Activated T-helper 1 cell treated with anti-CD3 and anti-CD28 coated beads, Interleukin-12 subunit alpha, Interleukin-12 subunit beta, Interleukin-2, Interleukin-4 antibody, amounts not matched to agents 30 ng/mL and 10 ng/mL and 1 ng/mL, durations not matched to agents 14 hours and 24 hours and 36 hours (primary cell): ENCODE measurements at regions of chr6 and their contacts with region 1.

Region 1: DNA sequence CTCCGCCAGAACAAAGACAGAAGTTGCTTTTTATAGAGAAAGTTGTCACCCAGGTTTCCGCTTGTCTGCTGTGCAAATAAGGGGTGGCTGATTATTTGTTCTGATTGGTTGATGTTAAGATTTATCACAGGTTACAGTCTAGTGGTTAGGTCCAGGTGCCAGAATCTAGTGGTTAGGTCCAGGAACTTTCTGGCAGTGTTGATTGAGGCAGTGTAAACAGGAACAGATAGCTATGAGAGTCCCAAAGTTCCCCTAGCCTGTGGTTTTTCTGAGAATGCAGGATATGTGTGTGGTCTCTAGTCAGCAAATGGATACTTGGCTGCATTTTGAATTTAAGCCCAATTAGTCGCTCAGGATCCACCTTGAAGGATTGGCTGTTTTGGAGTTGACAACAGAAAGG is 148.0 kb downstream of the TMEM200A start:
- DNase-seq: peak; percentile 82
- H3K4me3 Mint-ChIP-seq: peak overlapping the region; percentile 64
- H3K27ac Mint-ChIP-seq: peak overlapping the region; percentile 84
- H3K4me1 Mint-ChIP-seq: peaks cover 65% of the 10 kb centered on the region
- H3K27me3 Mint-ChIP-seq: no peaks in the 10 kb centered on the region

Region 2: GRCh38 chr6:129490521-129491245 is 1023.1 kb before region 1 on chr6:
- intact Hi-C with region 1: loop called (anchors 5 kb)
- DNase-seq: peak; percentile 69
- H3K4me3 Mint-ChIP-seq: peak overlapping the region; percentile 77
- H3K27ac Mint-ChIP-seq: peak overlapping the region; percentile 99
- H3K4me1 Mint-ChIP-seq: peaks cover 68% of the 10 kb centered on the region
- H3K27me3 Mint-ChIP-seq: no peaks in the 10 kb centered on the region

Region 3: DNA sequence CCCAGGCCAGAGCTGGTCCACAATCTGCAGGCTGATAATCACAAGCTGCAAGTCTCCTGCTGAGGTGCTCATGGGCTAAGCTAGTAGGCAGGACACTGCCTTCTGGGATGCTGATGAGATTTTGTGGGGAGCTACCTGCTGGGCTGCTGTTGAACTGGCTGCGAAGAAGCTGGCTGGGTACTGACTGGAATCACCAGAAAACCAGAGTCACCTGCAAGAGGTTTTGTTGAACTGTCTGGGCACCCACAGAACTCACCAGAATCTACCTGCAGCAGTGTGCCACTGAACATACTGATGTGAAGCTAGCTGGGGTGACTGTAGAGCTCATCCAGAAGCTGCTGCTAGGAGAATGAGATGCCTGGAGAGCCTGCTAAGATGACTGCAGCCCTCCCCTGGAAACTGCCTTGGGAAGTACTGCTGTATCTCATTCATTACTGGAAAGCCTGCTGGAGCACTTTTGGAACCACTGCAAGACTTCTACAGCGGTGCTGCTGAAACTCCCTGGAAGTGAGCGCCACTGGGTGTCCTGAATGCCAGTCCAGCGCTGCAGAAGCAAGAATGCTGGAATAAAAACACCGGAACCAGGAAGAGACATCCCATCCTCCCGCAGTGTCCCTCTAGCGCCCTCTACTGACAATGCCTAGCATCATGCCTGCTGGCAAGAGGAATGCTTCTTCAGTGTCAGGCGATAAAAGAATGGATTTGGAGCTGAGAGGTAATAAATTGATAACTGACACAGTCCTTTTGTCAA is 738.9 kb before region 1 on chr6:
- intact Hi-C with region 1: no loop called
- DNase-seq: peak; percentile 21
- H3K4me3 Mint-ChIP-seq: no peak overlapping the region
- H3K27ac Mint-ChIP-seq: no peak overlapping the region
- H3K4me1 Mint-ChIP-seq: no peaks in the 10 kb centered on the region
- H3K27me3 Mint-ChIP-seq: peaks cover 26% of the 10 kb centered on the region

Region 4: DNA sequence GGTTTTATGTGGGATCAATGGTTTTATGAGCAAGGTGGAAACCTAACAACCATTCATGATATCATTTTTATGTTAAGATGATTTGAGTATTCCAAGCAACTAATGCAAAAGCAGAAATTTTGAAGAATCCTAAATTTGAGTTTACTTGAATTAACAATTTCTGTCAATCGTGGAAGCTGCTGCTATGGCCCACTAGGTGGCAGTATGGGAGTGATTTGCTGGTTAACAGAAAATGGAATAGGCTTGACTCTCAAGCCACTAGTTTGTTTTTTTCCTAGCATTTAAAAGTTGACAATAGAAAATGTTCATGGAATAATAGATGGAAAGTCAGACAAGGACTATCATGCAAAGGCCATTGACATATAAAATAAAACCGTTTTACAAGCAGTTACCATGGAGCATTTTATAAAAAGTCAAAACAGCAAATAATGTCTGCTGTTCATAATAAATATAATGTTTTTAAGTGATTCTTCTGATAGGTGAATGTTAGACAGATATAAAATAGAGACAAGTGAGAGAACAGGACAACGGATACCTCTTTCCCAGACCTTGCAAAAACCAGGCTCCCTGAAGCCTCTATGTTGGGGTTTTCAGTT is 191.0 kb before region 1 on chr6:
- intact Hi-C with region 1: loop called (anchors 5 kb)
- DNase-seq: peak; percentile 26
- H3K4me3 Mint-ChIP-seq: no peak overlapping the region
- H3K27ac Mint-ChIP-seq: no peak overlapping the region
- H3K4me1 Mint-ChIP-seq: peaks cover 7% of the 10 kb centered on the region
- H3K27me3 Mint-ChIP-seq: peaks cover 11% of the 10 kb centered on the region

Region 5: GRCh38 chr6:130560231-130560630 is 46.5 kb after region 1 on chr6:
- intact Hi-C with region 1: no loop called
- DNase-seq: no peak
- H3K4me3 Mint-ChIP-seq: no peak overlapping the region
- H3K27ac Mint-ChIP-seq: no peak overlapping the region
- H3K4me1 Mint-ChIP-seq: peaks cover 18% of the 10 kb centered on the region
- H3K27me3 Mint-ChIP-seq: no peaks in the 10 kb centered on the region

Region 6: DNA sequence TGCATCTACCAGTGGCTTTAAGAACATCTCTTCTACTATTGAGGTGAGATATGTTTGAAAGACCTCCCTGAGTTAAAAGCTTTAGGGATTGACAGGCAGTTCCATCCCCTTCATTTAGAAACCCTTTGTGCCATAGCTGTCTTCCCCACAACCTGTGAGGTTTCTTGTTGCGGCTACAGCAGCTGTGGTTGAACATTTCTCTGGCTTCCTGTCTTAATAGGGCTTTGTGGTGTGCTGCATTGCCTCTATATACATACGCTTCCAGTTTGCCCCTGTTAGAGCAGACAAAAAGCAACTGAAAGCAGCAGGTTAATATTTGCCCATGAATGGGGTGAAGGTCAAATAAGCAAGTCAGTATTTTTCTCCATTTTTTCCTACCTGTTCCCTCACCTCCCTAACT is 62.2 kb after region 1 on chr6:
- intact Hi-C with region 1: loop called (anchors 2 kb)
- DNase-seq: peak; percentile 74
- H3K4me3 Mint-ChIP-seq: peak overlapping the region; percentile 62
- H3K27ac Mint-ChIP-seq: peak overlapping the region; percentile 72
- H3K4me1 Mint-ChIP-seq: peaks cover 48% of the 10 kb centered on the region
- H3K27me3 Mint-ChIP-seq: no peaks in the 10 kb centered on the region

Region 7: GRCh38 chr6:130625825-130626527 is 112.2 kb after region 1 on chr6:
- intact Hi-C with region 1: loop called (anchors 1 kb)
- DNase-seq: no peak
- H3K4me3 Mint-ChIP-seq: peak overlapping the region; percentile 15
- H3K27ac Mint-ChIP-seq: peak overlapping the region; percentile 81
- H3K4me1 Mint-ChIP-seq: peaks cover 49% of the 10 kb centered on the region
- H3K27me3 Mint-ChIP-seq: no peaks in the 10 kb centered on the region

Region 8: DNA sequence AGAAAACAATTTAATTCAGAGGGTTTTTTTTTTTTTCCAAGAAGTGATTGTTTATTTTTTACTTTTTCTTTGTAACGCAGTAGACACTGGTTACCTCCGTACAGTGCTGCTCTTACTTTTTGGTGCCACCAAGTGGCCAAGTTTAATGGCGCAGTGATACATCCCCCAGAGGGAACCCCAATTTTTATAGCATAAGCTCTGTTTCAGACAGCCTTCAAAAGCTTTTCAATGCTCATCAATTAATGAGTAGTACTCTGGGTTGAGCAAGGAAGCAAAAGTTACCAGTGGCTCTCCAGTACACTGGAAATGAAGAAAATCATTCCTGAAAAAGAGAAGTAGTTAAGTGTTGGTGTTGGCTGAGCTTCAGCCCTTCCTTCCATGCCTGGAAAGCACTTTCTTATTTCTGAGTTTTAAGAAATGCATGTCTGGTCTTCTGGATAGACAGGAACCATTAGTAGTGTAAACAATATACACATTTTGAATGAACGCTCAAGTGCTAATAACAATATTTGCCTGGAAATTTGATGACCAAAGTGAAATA is 184.3 kb after region 1 on chr6:
- intact Hi-C with region 1: loop called (anchors 2 kb)
- DNase-seq: peak; percentile 50
- H3K4me3 Mint-ChIP-seq: no peak overlapping the region
- H3K27ac Mint-ChIP-seq: peak overlapping the region; percentile 48
- H3K4me1 Mint-ChIP-seq: peaks cover 39% of the 10 kb centered on the region
- H3K27me3 Mint-ChIP-seq: peaks cover 6% of the 10 kb centered on the region